ENCODE measurements at regions of chr21 and their contacts with region 1.

Region 1: GRCh38 chr21:41419911-41420862 is 5.9 kb upstream of the MX1 start:
- DNase-seq: peak; percentile 39
- ATAC-seq: peak; percentile 94
- H3K4me3 ChIP-seq: peak overlapping the region; percentile 79
- H3K27ac ChIP-seq: peak overlapping the region; percentile 82
- H3K4me1 ChIP-seq: peaks cover 24% of the 10 kb centered on the region
- H3K27me3 ChIP-seq: no peaks in the 10 kb centered on the region
- CTCF ChIP-seq: no peak
- EP300 ChIP-seq: no peak; a peak in 1 of 4 replicates
- POLR2A ChIP-seq: peak; percentile 49; the same call in 1 of the 2 replicates
- RAD21 ChIP-seq: no peak

Region 2: DNA sequence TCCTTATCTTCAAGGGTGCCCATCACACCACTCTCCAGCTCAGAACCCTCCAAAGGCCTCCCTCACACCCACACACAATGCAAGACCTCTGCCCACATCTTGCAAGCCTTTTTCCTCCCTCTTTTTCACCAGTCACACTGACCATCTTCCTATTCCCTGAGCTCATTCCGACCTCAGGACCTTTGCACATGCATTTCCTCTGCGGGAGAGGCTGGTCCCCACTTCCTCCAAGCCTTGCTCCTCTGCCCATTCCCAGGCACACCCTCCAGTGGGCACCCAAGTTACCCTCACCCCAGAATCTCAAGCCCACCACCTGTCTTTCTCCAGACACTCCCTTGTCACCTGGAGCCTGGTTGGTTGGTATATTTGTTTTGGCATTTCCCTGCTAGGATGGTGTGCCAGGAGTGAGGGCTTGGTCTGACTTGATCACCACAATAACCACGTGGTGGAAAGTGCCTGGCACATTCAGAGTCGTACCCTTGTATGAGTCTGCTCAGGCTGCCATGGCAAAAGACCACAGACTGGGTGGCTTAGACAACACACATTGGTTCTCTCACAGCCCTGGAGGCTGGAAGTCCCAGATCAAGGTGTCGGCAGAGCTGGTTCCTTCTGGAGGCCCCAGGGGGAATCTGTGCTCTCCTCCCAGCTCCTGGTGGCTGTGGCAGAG is 45.2 kb before region 1 on chr21:
- CTCF ChIA-PET with region 1: interaction called, 24 read pairs
- POLR2A ChIA-PET with region 1: interaction called, 80 read pairs
- RAD21 ChIA-PET with region 1: interaction called, 36 read pairs
- SMC1A ChIA-PET with region 1: interaction called, 47 read pairs
- in situ Hi-C with region 1: no loop called
- intact Hi-C with region 1: no loop called
- DNase-seq: no peak
- ATAC-seq: peak; percentile 52
- H3K4me3 ChIP-seq: no peak overlapping the region
- H3K27ac ChIP-seq: no peak overlapping the region
- H3K4me1 ChIP-seq: peaks cover 6% of the 10 kb centered on the region; the same call in 1 of the 2 replicates
- H3K27me3 ChIP-seq: no peaks in the 10 kb centered on the region
- CTCF ChIP-seq: no peak
- EP300 ChIP-seq: no peak
- POLR2A ChIP-seq: no peak
- RAD21 ChIP-seq: no peak

Measured in GM12878 (cell line).